Activated CD4-positive, alpha-beta memory T cell treated with anti-CD3 and anti-CD28 coated beads for 36 hours (primary cell): ENCODE measurements at regions of chr7 and their contacts with region 1.

Region 1: DNA sequence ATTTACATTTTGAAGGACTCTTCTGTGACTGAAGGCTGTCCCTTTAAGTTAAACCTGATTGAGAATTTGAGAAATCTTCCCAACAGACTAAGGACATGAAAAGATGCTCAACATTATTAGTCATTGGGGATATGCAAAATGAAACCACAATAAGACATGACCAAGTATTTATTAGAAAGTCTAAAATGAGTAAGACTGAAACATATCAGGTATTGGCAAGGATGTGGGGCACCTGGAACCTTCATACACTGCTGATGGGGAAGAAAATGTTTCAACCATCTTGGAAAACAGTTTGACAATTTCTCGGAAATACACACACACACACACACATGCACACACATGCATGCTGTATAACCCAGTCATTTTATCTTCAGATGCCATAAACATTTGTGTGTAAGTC is 132.1 kb upstream of the CDK6 start:
- DNase-seq: no peak
- H3K4me3 Mint-ChIP-seq: no peak overlapping the region
- H3K27ac Mint-ChIP-seq: no peak overlapping the region
- H3K4me1 Mint-ChIP-seq: peaks cover 17% of the 10 kb centered on the region
- H3K27me3 Mint-ChIP-seq: no peaks in the 10 kb centered on the region

Region 2: GRCh38 chr7:92868683-92869293 is 99.7 kb before region 1 on chr7:
- CTCF ChIA-PET with region 1: no interaction called
- POLR2A ChIA-PET with region 1: no interaction called
- intact Hi-C with region 1: no loop called
- DNase-seq: no peak
- H3K4me3 Mint-ChIP-seq: no peak overlapping the region
- H3K27ac Mint-ChIP-seq: no peak overlapping the region
- H3K4me1 Mint-ChIP-seq: peaks cover 7% of the 10 kb centered on the region
- H3K27me3 Mint-ChIP-seq: no peaks in the 10 kb centered on the region

Region 3: GRCh38 chr7:92992483-92992882 is 24.0 kb after region 1 on chr7:
- CTCF ChIA-PET with region 1: no interaction called
- POLR2A ChIA-PET with region 1: no interaction called
- intact Hi-C with region 1: no loop called
- DNase-seq: no peak
- H3K4me3 Mint-ChIP-seq: no peak overlapping the region
- H3K27ac Mint-ChIP-seq: no peak overlapping the region
- H3K4me1 Mint-ChIP-seq: no peaks in the 10 kb centered on the region
- H3K27me3 Mint-ChIP-seq: peaks cover 8% of the 10 kb centered on the region

Region 4: GRCh38 chr7:93027044-93027443 is 58.5 kb after region 1 on chr7:
- CTCF ChIA-PET with region 1: no interaction called
- POLR2A ChIA-PET with region 1: no interaction called
- intact Hi-C with region 1: loop called (anchors 2 kb)
- DNase-seq: no peak
- H3K4me3 Mint-ChIP-seq: no peak overlapping the region
- H3K27ac Mint-ChIP-seq: no peak overlapping the region
- H3K4me1 Mint-ChIP-seq: peaks cover 5% of the 10 kb centered on the region
- H3K27me3 Mint-ChIP-seq: peaks cover 22% of the 10 kb centered on the region